ENCODE measurements at regions of chr2 and their contacts with region 1.

Region 1: DNA sequence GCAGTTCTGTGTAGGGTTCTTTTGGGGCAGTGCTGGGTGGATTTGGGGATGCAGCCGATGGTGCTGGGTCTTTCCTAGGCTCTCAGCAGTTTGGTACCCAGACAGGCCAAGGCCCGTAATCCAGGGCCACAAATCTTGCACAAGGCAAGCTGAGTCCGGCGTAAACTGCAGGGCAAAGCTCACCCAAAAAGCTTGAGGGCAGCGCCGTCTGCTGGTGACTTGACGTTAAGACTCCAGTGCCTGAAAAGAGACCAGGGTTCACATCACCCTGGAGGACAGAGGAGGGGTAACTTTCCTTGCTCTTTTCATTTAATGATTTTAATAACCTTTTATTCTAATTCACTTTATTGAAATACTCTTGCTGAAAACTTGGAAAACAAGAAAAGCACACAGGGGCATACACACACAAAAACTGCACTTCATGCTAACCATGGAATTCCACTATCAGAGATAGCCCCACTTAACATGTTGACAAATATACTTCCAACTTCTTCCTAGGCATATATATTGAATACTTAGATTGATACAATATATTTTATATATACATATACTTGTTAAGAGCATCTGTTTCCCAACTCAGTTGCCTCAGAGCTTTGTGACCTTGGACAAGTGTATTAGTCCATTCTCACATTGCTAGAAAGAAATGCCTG is 38.9 kb downstream of the CNGA3 start:
- DNase-seq: peak; percentile 63 to 74
- H3K4me3 ChIP-seq: no peak overlapping the region
- H3K27ac ChIP-seq: no peak overlapping the region
- H3K4me1 ChIP-seq: no peaks in the 10 kb centered on the region
- H3K27me3 ChIP-seq: peaks cover 25% of the 10 kb centered on the region
- CTCF ChIP-seq: peak; percentile 99

Region 2: GRCh38 chr2:98127229-98127989 is 257.8 kb before region 1 on chr2:
- CTCF ChIA-PET with region 1: interaction called, 10 read pairs
- POLR2A ChIA-PET with region 1: no interaction called
- intact Hi-C with region 1: no loop called
- DNase-seq: no peak
- H3K4me3 ChIP-seq: no peak overlapping the region
- H3K27ac ChIP-seq: no peak overlapping the region
- H3K4me1 ChIP-seq: no peaks in the 10 kb centered on the region
- H3K27me3 ChIP-seq: peaks cover 81% of the 10 kb centered on the region
- CTCF ChIP-seq: no peak

Region 3: DNA sequence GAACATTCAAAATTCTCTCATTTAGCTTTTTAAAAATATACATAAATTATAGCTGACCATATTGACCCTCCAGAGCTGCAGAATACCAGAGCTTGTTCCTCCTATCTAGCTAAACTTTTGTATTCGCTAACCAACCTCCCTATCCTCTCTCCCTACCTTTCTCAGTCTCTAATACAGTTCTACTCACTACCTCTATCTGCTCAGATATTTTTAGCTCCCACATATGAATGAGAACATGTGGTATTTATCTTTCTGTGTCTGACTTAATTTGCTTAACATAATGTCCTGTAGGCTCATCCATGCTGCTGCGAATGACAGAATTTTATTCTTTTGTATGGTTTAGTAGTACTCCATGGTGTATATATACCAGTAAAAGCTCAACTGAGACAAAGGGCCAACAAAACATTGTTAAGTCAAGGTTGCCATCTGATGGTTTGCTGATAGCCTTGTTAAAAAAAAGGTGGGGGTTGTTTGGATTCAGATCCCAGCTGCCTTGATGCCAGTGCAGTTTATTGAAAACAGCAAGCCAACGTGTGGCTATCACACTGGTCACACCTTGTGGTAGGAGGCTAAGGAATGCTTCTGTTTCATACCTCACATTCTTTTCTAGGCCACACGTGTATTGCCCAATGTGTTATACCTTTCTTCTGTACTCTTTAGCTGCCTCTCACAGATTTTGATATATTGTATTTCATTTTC is 196.7 kb before region 1 on chr2:
- CTCF ChIA-PET with region 1: no interaction called
- POLR2A ChIA-PET with region 1: no interaction called
- intact Hi-C with region 1: loop called (anchors 10 kb)
- DNase-seq: peak; percentile 44 to 94
- H3K4me3 ChIP-seq: no peak overlapping the region
- H3K27ac ChIP-seq: no peak overlapping the region
- H3K4me1 ChIP-seq: peaks cover 5% of the 10 kb centered on the region
- H3K27me3 ChIP-seq: no peaks in the 10 kb centered on the region
- CTCF ChIP-seq: peak; percentile 55

Region 4: DNA sequence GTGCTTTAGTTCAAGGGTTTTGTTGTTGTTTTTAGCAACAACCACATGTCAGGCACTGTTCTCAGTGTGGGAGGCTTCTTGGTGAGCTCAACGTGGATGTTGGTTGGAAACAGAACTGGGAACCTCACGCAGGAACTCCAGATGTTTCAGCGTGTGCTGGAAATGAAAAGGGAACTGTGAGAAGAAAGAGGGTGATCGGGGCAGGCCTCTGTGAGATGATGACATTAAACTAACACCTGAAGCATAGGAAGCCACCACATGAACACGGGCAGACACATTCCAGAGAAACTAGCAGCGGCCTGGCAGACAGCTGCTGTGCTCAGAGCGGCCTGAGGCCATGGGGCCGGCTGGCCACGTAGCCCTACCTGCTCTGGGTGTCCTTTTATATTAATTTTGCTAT is 156.7 kb after region 1 on chr2:
- CTCF ChIA-PET with region 1: interaction called, 10 read pairs
- POLR2A ChIA-PET with region 1: no interaction called
- intact Hi-C with region 1: no loop called
- DNase-seq: no peak
- H3K4me3 ChIP-seq: no peak overlapping the region
- H3K27ac ChIP-seq: no peak overlapping the region
- H3K4me1 ChIP-seq: no peaks in the 10 kb centered on the region
- H3K27me3 ChIP-seq: no peaks in the 10 kb centered on the region
- CTCF ChIP-seq: no peak

Region 5: GRCh38 chr2:98822301-98823164 is 437.4 kb after region 1 on chr2:
- CTCF ChIA-PET with region 1: no interaction called
- POLR2A ChIA-PET with region 1: no interaction called
- intact Hi-C with region 1: no loop called
- DNase-seq: no peak
- H3K4me3 ChIP-seq: no peak overlapping the region
- H3K27ac ChIP-seq: no peak overlapping the region
- H3K4me1 ChIP-seq: peaks cover 12% of the 10 kb centered on the region
- H3K27me3 ChIP-seq: no peaks in the 10 kb centered on the region
- CTCF ChIP-seq: no peak

Measured in PC-9 (cell line).